Upper lobe of right lung (tissue), 1 donor: ENCODE measurements at regions of chr6 and their contacts with region 1.

Region 1: GRCh38 chr6:41787219-41787917 is at the start of gene TOMM6:
- DNase-seq: peak; percentile 98
- ATAC-seq: peak; percentile 93
- H3K4me3 ChIP-seq: peak within 1 kb of the TSS; percentile 98
- H3K27ac ChIP-seq: peak within 1 kb of the TSS; percentile 98
- H3K4me1 ChIP-seq: peaks cover 48% of the 10 kb centered on the region
- H3K27me3 ChIP-seq: no peaks in the 10 kb centered on the region
- CTCF ChIP-seq: peak; percentile 89
- total RNA-seq, gene TOMM6: 138 TPM

Region 2: GRCh38 chr6:41872147-41872546 is 84.8 kb after region 1 on chr6:
- intact Hi-C with region 1: no loop called
- DNase-seq: peak; percentile 67
- ATAC-seq: peak; percentile 73
- H3K4me3 ChIP-seq: no peak overlapping the region
- H3K27ac ChIP-seq: no peak overlapping the region
- H3K4me1 ChIP-seq: no peaks in the 10 kb centered on the region
- H3K27me3 ChIP-seq: no peaks in the 10 kb centered on the region
- CTCF ChIP-seq: no peak

Region 3: GRCh38 chr6:41936073-41936837 is 148.9 kb after region 1 on chr6:
- intact Hi-C with region 1: loop called (anchors 10 kb)
- DNase-seq: peak; percentile 80
- ATAC-seq: peak; percentile 80
- H3K4me3 ChIP-seq: no peak overlapping the region
- H3K27ac ChIP-seq: peak overlapping the region; percentile 84
- H3K4me1 ChIP-seq: peaks cover 62% of the 10 kb centered on the region
- H3K27me3 ChIP-seq: no peaks in the 10 kb centered on the region
- CTCF ChIP-seq: peak; percentile 81